Heart left ventricle (tissue), 16 donors: ENCODE measurements at regions of chr6 and their contacts with region 1.

Region 1: GRCh38 chr6:74690365-74690764 is 515.5 kb downstream of the COL12A1 start:
- DNase-seq: no peak
- ATAC-seq: no peak
- H3K4me3 ChIP-seq: no peak overlapping the region
- H3K27ac ChIP-seq: no peak overlapping the region
- H3K4me1 ChIP-seq: no peaks in the 10 kb centered on the region
- H3K27me3 ChIP-seq: no peaks in the 10 kb centered on the region
- CTCF ChIP-seq: no peak
- POLR2A ChIP-seq: no peak

Region 2: DNA sequence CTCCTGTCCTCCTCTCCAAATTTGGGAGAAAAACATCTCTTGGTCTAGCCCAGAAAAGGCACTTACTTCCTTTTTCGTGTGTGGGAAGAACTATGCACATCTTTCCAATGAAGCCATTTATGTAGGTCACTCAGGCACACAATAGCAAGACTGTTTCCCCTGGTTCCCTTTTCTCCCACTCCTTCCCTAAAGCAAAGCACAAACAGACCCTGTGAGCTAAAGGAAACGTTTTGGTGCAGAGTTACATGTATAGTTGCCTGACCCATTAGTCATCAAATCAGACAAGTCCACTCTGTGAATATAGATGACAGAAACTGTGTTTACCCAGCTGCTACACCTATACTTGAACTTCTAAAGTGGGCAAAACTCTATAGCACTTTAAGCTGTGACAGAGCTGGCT is 40.8 kb after region 1 on chr6:
- intact Hi-C with region 1: loop called in 1 of 10 experiments (anchors 2 kb)
- DNase-seq: no peak
- ATAC-seq: peak in 2 of 4 donors; percentile 20 to 69
- H3K4me3 ChIP-seq: no peak overlapping the region
- H3K27ac ChIP-seq: peak overlapping the region in 3 of 12 donors; percentile 31 to 39 (median 36)
- H3K4me1 ChIP-seq: peaks cover 0 to 6% (median 0%) of the 10 kb centered on the region in 12 donors
- H3K27me3 ChIP-seq: no peaks in the 10 kb centered on the region
- CTCF ChIP-seq: no peak
- POLR2A ChIP-seq: no peak